Activated CD8-positive, alpha-beta T cell treated with anti-CD3 and anti-CD28 coated beads for 36 hours (primary cell): ENCODE measurements at regions of chr2 and their contacts with region 1.

Region 1: GRCh38 chr2:17646081-17646554 is 105.6 kb downstream of the VSNL1 start:
- DNase-seq: peak; percentile 62
- ATAC-seq: peak; percentile 89
- H3K4me3 Mint-ChIP-seq: no peak overlapping the region
- H3K27ac Mint-ChIP-seq: peak overlapping the region; percentile 9
- H3K4me1 Mint-ChIP-seq: peaks cover 10% of the 10 kb centered on the region
- H3K27me3 Mint-ChIP-seq: no peaks in the 10 kb centered on the region
- CTCF ChIP-seq: peak; percentile 76

Region 2: GRCh38 chr2:17658251-17658843 is 12.2 kb after region 1 on chr2:
- CTCF ChIA-PET with region 1: interaction called, 14 read pairs
- POLR2A ChIA-PET with region 1: interaction called, 3 read pairs
- intact Hi-C with region 1: no loop called
- DNase-seq: peak; percentile 11
- ATAC-seq: peak; percentile 72
- H3K4me3 Mint-ChIP-seq: no peak overlapping the region
- H3K27ac Mint-ChIP-seq: no peak overlapping the region
- H3K4me1 Mint-ChIP-seq: peaks cover 11% of the 10 kb centered on the region
- H3K27me3 Mint-ChIP-seq: no peaks in the 10 kb centered on the region
- CTCF ChIP-seq: no peak

Region 3: DNA sequence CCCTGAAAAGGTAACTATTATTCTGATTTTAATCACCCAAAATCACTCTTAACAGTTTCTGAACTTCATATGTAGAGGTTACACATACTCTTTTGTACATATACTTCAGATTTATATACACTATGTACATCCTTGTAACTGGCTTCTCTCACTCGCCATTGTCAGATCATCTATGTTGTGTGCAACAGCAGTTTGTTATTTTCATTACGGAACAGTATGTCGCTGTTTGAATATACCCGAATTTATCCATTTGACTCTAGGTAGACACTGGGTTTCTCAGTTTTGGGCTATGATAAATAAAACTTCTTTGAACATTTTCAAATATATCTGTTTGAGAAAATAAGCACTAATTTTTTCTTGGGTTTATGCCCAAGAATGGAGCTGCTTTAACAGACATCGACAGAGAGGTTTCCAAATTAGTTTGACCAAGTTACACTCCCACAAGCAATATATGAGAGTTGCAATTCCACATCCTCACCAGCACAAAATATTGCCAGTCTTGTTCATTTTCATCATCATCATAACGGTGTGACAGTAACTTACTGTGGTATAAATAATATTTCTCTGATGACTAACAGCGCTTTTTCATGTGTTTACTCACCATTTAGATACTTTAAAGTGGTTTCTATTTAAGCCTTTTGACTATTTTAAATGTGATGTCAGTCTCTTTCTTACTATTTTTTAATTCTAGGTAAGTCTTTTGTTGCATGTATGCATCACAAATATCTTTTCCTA is 26.6 kb after region 1 on chr2:
- CTCF ChIA-PET with region 1: interaction called, 136 read pairs
- POLR2A ChIA-PET with region 1: interaction called, 4 read pairs
- intact Hi-C with region 1: no loop called
- DNase-seq: no peak
- ATAC-seq: peak; percentile 79
- H3K4me3 Mint-ChIP-seq: no peak overlapping the region
- H3K27ac Mint-ChIP-seq: no peak overlapping the region
- H3K4me1 Mint-ChIP-seq: no peaks in the 10 kb centered on the region
- H3K27me3 Mint-ChIP-seq: no peaks in the 10 kb centered on the region
- CTCF ChIP-seq: no peak